Left ventricle myocardium inferior (tissue), 1 donor: ENCODE measurements at regions of chr16 and their contacts with region 1.

Region 1: GRCh38 chr16:88886845-88887521 is 20.5 kb upstream of the PABPN1L start:
- DNase-seq: peak; percentile 93
- H3K4me3 ChIP-seq: peak overlapping the region; percentile 44
- H3K27ac ChIP-seq: peak overlapping the region; percentile 92
- H3K4me1 ChIP-seq: peaks cover 36% of the 10 kb centered on the region
- H3K27me3 ChIP-seq: peaks cover 18% of the 10 kb centered on the region
- CTCF ChIP-seq: peak; percentile 45

Region 2: DNA sequence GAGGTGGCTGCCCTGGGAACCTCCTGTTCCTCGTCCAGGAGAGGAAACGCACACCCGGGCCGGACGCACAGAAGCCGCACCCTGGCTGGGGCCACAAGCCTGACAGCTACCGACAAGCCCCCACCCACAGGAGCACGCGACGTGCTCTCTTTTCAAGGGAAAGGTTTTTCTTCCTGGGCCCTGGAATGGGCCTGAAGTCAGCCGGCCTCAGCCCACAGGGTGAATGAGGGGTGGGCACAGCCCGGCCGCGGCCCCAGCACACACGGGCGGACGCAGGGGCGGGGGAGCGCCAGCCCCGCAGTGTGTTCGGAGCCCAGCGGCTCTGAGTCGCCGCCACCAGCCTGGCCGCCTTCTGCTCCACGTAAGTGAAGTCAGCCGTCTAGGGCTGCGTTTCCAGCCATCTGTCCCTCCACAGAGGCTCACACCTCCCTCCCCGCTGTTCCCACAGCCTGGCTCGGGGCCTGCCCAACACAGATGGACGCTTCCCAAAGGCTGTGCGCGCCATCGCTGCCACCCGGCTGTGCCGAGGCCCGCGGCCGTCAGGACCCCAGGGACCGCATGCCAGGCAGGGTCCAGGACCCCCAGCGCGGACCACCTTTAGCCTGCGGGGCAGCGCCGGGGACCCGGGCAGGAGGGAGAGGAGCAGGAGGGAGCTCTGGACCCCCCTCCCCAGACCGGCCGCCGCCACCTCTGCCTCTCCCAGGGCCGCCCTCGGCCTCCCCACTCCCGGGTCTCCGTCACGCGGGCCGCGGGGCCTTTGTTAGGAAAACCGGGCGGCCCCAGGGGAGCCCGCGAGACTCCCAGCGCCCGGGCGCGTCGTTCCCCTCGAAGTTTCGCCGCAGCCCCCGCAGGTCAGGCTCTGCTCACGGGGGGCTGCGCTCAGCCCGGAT is 53.2 kb after region 1 on chr16:
- intact Hi-C with region 1: loop called (anchors 10 kb)
- DNase-seq: peak; percentile 67
- H3K4me3 ChIP-seq: peak overlapping the region; percentile 85
- H3K27ac ChIP-seq: peak overlapping the region; percentile 94
- H3K4me1 ChIP-seq: peaks cover 63% of the 10 kb centered on the region
- H3K27me3 ChIP-seq: peaks cover 70% of the 10 kb centered on the region
- CTCF ChIP-seq: no peak

Region 3: GRCh38 chr16:89422905-89423630 is 536.1 kb after region 1 on chr16:
- intact Hi-C with region 1: no loop called
- DNase-seq: no peak
- H3K4me3 ChIP-seq: no peak overlapping the region
- H3K27ac ChIP-seq: peak overlapping the region; percentile 39
- H3K4me1 ChIP-seq: peaks cover 75% of the 10 kb centered on the region
- H3K27me3 ChIP-seq: no peaks in the 10 kb centered on the region
- CTCF ChIP-seq: no peak